Activated CD8-positive, alpha-beta T cell treated with anti-CD3 and anti-CD28 coated beads, Interleukin-2, amount 10 ng/mL, durations not matched to agents 7 days and 5 days (primary cell): ENCODE measurements at regions of chr12 and their contacts with region 1.

Region 1: DNA sequence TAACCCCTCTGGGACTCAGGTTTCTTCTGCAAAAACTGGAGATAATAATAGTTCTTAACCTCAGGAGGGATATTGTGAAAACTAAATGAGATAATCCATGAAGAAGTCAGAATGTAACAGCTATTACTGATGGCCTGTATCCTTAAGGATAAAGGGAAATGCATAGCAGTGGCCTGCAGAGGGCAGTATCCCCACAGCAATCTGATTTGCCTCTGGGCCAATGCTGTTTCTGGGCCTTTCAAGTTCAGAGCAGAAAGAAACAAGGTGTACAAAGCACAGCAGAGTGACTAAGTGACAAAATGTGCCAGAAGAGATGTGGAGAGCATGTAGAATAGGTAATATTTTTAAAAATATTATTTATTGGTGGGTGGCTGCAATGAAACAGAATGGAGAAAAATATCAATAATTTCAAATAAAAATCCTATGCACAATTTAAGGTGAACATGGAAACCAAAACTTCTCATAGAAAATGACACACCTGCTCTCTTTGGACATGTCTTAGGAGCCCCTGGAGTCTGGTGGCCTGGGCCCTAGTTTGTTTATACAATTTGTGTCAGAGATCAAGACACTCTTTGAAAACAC is 90.3 kb downstream of the C12orf75 start:
- DNase-seq: peak; percentile 75
- ATAC-seq: peak; percentile 76
- H3K4me3 Mint-ChIP-seq: no peak overlapping the region
- H3K27ac Mint-ChIP-seq: no peak overlapping the region
- H3K4me1 Mint-ChIP-seq: no peaks in the 10 kb centered on the region
- H3K27me3 Mint-ChIP-seq: peaks cover 3% of the 10 kb centered on the region

Region 2: DNA sequence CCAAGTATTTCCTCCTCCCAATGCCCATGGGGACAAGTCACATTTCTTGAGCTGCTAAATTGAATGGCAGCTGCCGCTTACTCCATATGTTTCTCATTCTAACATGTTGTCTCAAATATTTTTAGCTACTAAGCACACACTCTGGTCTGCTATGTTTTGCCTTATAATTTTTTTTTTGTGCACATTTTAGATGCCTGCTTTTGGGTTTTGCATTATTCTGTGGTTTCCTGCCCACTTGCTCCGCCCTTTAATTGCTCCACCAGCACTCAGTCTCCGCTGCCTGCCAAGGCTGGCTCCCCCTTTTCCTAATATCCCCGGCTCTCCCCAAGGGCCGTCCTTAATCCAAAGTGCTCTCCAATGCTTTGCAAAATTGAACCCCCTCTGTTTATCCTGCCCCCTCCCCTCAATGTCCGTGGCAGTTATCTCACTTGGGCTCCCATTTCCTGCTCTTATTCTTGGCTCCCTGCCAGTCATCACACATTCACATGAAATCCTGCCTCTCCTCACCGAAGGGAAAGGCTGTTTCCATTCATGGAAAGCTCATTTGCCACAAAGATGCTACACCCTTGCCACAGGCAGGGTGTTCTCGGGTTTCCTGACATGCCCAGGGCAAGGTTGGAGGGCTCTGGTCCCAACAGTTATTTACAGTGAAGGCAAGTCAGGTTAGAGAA is 10.8 kb before region 1 on chr12:
- CTCF ChIA-PET with region 1: interaction called, 16 read pairs
- POLR2A ChIA-PET with region 1: no interaction called
- DNase-seq: peak; percentile 25
- ATAC-seq: no peak
- H3K4me3 Mint-ChIP-seq: peak overlapping the region; percentile 29
- H3K27ac Mint-ChIP-seq: peak overlapping the region; percentile 56
- H3K4me1 Mint-ChIP-seq: peaks cover 15% of the 10 kb centered on the region
- H3K27me3 Mint-ChIP-seq: peaks cover 7% of the 10 kb centered on the region

Region 3: GRCh38 chr12:106136263-106136662 is 715.5 kb after region 1 on chr12:
- CTCF ChIA-PET with region 1: interaction called, 50 read pairs
- POLR2A ChIA-PET with region 1: no interaction called
- DNase-seq: peak; percentile 80
- ATAC-seq: peak; percentile 45
- H3K4me3 Mint-ChIP-seq: no peak overlapping the region
- H3K27ac Mint-ChIP-seq: no peak overlapping the region
- H3K4me1 Mint-ChIP-seq: no peaks in the 10 kb centered on the region
- H3K27me3 Mint-ChIP-seq: peaks cover 56% of the 10 kb centered on the region

Region 4: DNA sequence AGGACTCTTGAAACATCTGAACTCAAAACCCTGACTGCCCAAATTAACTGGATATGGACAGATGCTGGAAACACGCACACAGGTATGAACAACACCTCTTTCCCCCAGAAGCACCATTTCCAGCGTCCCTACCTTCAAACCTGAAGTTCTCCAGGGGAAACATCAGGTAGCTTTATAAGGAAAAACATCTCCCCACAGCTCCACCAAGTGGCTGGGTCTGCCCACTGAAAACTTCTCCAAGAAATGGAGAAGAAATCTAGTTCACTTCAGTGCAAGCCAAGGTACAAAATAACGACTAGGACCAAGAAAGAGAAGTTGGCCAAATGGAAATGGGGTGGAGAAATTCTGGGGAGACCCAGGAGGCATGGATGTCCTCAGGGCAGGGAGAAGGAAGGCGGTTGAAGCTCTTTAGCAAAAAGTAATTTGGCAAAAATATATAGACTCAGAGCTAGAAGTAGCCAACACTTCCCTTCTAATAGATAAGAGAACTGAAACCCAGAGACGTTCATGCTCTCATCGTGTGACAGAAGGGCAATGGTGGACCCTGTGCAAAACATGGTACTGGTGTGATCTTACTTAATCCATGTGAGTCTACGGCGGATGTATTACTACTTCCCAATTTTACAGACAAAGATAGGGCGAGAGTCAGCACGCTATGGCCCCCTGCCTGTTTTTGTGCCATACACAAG is 728.5 kb after region 1 on chr12:
- CTCF ChIA-PET with region 1: interaction called, 12 read pairs
- POLR2A ChIA-PET with region 1: no interaction called
- DNase-seq: no peak
- ATAC-seq: no peak
- H3K4me3 Mint-ChIP-seq: no peak overlapping the region
- H3K27ac Mint-ChIP-seq: no peak overlapping the region
- H3K4me1 Mint-ChIP-seq: no peaks in the 10 kb centered on the region
- H3K27me3 Mint-ChIP-seq: peaks cover 19% of the 10 kb centered on the region

Region 5: DNA sequence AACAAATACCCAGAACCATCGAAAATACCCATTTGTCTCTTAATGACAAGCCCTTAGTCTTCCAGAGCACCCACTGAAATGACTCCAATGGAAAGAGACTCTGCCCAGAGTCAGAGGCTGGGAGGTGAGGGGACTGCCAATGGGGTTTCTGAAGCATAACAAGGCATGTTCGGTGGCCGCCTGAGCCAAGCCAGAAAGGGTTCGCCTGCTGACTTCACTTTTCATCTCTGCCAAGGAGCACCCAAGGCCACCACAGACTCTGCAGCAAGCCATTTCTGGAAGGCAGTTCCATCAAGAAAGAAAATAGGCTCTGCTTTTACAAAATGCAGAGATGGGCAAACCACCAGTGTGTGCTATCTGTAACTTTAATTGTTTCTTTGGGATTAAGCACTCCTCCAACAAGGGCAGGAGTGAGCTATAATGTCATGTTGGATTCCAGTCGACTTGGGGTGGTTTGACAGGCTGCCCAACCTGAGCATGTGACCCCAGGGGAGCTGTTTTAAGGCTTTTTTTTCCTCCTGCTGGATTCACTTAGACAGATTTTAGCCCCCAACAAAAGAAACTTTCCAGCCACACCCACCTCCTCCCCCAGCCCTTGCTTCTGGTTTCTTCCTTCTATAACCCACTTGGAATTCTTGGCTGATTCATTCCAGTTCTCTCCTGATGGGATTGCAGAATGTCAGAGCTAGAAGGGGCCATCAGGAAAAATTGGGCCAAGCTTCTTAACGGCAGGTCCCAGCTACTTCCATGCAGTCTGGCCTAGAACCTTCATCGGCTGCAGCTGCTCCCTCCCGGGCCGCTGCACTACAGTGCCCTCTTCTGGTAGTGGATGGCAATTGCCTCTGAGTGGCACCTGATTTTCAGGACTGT is 803.0 kb after region 1 on chr12:
- CTCF ChIA-PET with region 1: interaction called, 13 read pairs
- POLR2A ChIA-PET with region 1: no interaction called
- DNase-seq: peak; percentile 78
- ATAC-seq: peak; percentile 86
- H3K4me3 Mint-ChIP-seq: no peak overlapping the region
- H3K27ac Mint-ChIP-seq: no peak overlapping the region
- H3K4me1 Mint-ChIP-seq: peaks cover 25% of the 10 kb centered on the region
- H3K27me3 Mint-ChIP-seq: peaks cover 5% of the 10 kb centered on the region